A549 (cell line): ENCODE measurements at regions of chr20 and their contacts with region 1.

Region 1: GRCh38 chr20:50790651-50791277 is 4.1 kb upstream of the BCAS4 start:
- DNase-seq: peak; percentile 87 to 96
- ATAC-seq: peak; percentile 78 to 86
- H3K4me3 ChIP-seq: no peak overlapping the region
- H3K27ac ChIP-seq: peak overlapping the region; percentile 90
- H3K4me1 ChIP-seq: peaks cover 32% of the 10 kb centered on the region
- CTCF ChIP-seq: peak; percentile 68
- EP300 ChIP-seq: no peak
- POLR2A ChIP-seq: peak; percentile 42
- RAD21 ChIP-seq: peak; percentile 31 to 57; a peak in 4 of 5 replicates

Region 2: DNA sequence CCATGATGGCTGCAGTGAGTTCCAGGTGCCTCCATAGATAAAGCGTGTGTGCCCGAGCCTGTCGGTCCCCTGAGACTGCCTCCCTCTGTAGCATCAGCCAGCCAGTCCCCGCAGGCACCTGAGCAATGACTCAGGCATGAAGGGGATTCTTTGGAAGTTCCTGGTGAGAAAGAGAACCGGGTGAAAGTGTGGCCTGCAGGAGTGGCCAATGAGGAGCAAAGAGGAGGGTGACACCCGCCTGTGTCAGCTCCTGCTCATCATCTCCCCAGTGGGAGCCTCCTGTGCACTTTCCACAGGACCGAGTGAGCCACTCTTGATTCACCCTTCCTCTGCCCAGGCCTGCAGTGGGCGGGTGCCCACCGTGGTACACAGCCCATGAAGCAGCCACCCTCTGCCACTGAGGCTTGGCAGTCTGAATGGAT is 351.8 kb before region 1 on chr20:
- CTCF ChIA-PET with region 1: no interaction called
- POLR2A ChIA-PET with region 1: no interaction called
- DNase-seq: peak; percentile 78 to 87
- ATAC-seq: peak; percentile 63 to 67
- H3K4me3 ChIP-seq: no peak overlapping the region
- H3K27ac ChIP-seq: peak overlapping the region; percentile 90 to 94
- H3K4me1 ChIP-seq: peaks cover 83% of the 10 kb centered on the region
- CTCF ChIP-seq: no peak
- EP300 ChIP-seq: peak in 1 of 2 experiments; percentile 47; a peak in 1 of 5 replicates
- POLR2A ChIP-seq: no peak
- RAD21 ChIP-seq: 0 out of 5 replicates have a peak, but pooled peaks of 1 of the 2 experiments have one; percentile 3

Region 3: GRCh38 chr20:50588034-50588611 is 202.6 kb before region 1 on chr20:
- CTCF ChIA-PET with region 1: interaction called, 14 read pairs
- POLR2A ChIA-PET with region 1: no interaction called
- DNase-seq: peak; percentile 72 to 90
- ATAC-seq: peak; percentile 78 to 88; a peak in 5 of 6 replicates
- H3K4me3 ChIP-seq: no peak overlapping the region
- H3K27ac ChIP-seq: 0 out of 6 replicates have a peak overlapping the region, but pooled peaks of 1 of the 2 experiments have one; percentile 4
- H3K4me1 ChIP-seq: no peaks in the 10 kb centered on the region
- CTCF ChIP-seq: peak; percentile 88
- EP300 ChIP-seq: no peak
- POLR2A ChIP-seq: no peak
- RAD21 ChIP-seq: peak; percentile 57 to 63

Region 4: GRCh38 chr20:50724851-50725721 is 65.7 kb before region 1 on chr20:
- CTCF ChIA-PET with region 1: interaction called, 11 read pairs
- POLR2A ChIA-PET with region 1: no interaction called
- DNase-seq: peak; percentile 73 to 86
- ATAC-seq: peak; percentile 89
- H3K4me3 ChIP-seq: no peak overlapping the region
- H3K27ac ChIP-seq: peak overlapping the region; percentile 89 to 96
- H3K4me1 ChIP-seq: peaks cover 65% of the 10 kb centered on the region
- CTCF ChIP-seq: no peak
- EP300 ChIP-seq: peak in 1 of 2 experiments; percentile 74; a peak in 1 of 5 replicates
- POLR2A ChIP-seq: no peak
- RAD21 ChIP-seq: peak; percentile 12 to 28; a peak in 1 of 5 replicates

Region 5: GRCh38 chr20:50762435-50763201 is 28.1 kb before region 1 on chr20:
- CTCF ChIA-PET with region 1: interaction called, 276 read pairs
- POLR2A ChIA-PET with region 1: interaction called, 11 read pairs
- DNase-seq: peak; percentile 51 to 91
- ATAC-seq: peak; percentile 61 to 72
- H3K4me3 ChIP-seq: 0 out of 3 replicates have a peak overlapping the region, but pooled peaks have one; percentile 4
- H3K27ac ChIP-seq: peak overlapping the region; percentile 96 to 98
- H3K4me1 ChIP-seq: peaks cover 66% of the 10 kb centered on the region
- CTCF ChIP-seq: no peak
- EP300 ChIP-seq: peak; percentile 40 to 85; a peak in 3 of 5 replicates
- POLR2A ChIP-seq: no peak
- RAD21 ChIP-seq: 0 out of 5 replicates have a peak, but pooled peaks have one; percentile 5 to 22

Region 6: GRCh38 chr20:50826121-50826520 is 35.4 kb after region 1 on chr20:
- CTCF ChIA-PET with region 1: interaction called, 16 read pairs
- POLR2A ChIA-PET with region 1: no interaction called
- DNase-seq: no peak
- ATAC-seq: no peak
- H3K4me3 ChIP-seq: no peak overlapping the region
- H3K27ac ChIP-seq: no peak overlapping the region
- H3K4me1 ChIP-seq: 0 out of 3 replicates have a peak, but pooled peaks cover 2% of the 10 kb centered on the region
- CTCF ChIP-seq: no peak
- EP300 ChIP-seq: no peak
- POLR2A ChIP-seq: no peak
- RAD21 ChIP-seq: no peak

Region 7: DNA sequence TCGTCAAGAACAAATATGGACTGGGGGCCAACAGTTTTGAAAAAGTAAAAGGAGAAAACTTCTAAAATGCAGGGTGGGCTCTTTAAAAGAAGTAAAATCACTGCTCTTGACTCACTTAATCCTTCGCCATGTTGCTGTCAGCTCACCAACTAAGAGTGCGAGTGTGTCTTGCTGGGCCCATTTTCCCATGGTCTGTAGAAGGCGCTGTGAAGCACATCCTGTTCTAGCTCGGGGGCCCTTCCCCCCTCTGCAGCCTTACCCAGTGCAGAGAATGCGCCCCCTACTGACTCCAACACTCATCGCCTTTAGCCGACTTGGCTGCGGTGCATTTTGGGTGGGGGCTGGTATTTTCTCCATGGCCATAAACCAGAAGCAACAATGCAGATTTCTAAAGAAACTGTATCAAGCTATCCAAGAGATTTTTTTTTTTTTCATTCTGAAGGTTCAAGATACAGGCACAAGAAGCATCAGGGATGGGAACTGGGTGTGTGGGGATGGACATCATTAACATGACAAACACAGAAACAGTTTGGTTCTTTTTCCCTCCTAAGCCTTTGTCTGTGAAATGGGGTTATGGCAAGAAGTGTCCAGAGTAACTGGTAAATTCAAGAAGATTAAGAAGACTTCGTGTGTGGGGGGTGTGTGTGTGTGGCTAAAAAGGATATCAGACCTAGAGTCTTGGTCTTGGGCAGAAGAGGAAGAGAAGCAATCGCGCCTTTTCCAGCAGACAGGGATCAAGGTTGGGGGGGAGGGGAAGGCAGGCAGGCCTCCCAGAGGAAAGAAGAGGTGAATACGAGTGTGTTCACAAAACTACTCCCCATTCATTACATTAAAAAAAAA is 138.8 kb after region 1 on chr20:
- CTCF ChIA-PET with region 1: interaction called, 187 read pairs
- POLR2A ChIA-PET with region 1: interaction called, 31 read pairs
- DNase-seq: peak; percentile 83 to 98
- ATAC-seq: peak; percentile 64 to 87
- H3K4me3 ChIP-seq: peak overlapping the region; percentile 83
- H3K27ac ChIP-seq: peak overlapping the region; percentile 98 to 99
- H3K4me1 ChIP-seq: peaks cover 40% of the 10 kb centered on the region
- CTCF ChIP-seq: peak; percentile 99
- EP300 ChIP-seq: no peak
- POLR2A ChIP-seq: no peak
- RAD21 ChIP-seq: peak; percentile 71 to 73

Region 8: DNA sequence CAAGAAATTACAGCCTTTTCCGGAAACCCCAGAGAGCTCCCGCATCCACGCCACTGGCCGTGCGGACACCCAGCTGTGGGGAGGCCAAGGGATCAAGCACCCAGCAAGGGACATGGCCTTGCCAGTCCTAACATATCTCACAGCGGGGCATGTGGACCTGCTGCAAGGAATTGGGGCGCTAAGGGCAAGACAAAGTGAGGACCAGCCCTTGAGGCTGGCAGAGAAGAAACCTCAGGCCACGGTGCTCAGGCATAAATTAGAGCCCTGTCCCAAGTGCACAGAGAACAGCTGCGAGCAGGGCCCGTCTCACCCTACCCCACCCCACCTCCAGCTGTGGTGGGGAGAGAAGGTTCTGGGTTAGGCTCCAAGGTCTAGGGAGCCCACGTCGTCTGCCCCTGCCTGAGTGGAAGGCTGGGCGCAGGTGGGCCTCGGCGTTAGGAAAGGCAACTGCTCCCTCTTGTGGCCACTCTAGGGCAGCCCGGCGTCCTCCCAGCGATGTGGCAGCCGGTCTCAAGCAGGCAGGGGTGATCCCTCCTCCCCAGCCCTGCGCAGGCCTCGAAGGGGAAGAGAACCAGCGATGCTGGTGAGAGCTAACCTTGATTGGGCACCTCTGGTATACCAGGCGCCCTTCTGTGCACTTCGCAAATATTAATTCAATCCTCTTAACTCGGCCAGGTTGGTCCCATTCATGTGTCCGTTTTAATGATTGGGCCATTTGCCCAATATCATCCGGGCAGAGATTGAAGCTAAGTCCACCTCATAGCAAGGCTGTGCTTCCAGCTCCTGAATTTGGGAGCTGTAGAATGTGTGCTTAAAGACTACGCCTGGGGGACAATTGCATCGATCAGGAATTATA is 516.0 kb after region 1 on chr20:
- CTCF ChIA-PET with region 1: interaction called, 13 read pairs
- POLR2A ChIA-PET with region 1: no interaction called
- DNase-seq: peak; percentile 66 to 78
- ATAC-seq: peak; percentile 98 to 100
- H3K4me3 ChIP-seq: no peak overlapping the region
- H3K27ac ChIP-seq: peak overlapping the region; percentile 26 to 41; a peak in 4 of 6 replicates
- H3K4me1 ChIP-seq: 0 out of 3 replicates have a peak, but pooled peaks cover 3% of the 10 kb centered on the region
- CTCF ChIP-seq: peak; percentile 94
- EP300 ChIP-seq: no peak
- POLR2A ChIP-seq: no peak
- RAD21 ChIP-seq: peak; percentile 95 to 97